IMR-90 (cell line): ENCODE measurements at regions of chr10 and their contacts with region 1.

Region 1: DNA sequence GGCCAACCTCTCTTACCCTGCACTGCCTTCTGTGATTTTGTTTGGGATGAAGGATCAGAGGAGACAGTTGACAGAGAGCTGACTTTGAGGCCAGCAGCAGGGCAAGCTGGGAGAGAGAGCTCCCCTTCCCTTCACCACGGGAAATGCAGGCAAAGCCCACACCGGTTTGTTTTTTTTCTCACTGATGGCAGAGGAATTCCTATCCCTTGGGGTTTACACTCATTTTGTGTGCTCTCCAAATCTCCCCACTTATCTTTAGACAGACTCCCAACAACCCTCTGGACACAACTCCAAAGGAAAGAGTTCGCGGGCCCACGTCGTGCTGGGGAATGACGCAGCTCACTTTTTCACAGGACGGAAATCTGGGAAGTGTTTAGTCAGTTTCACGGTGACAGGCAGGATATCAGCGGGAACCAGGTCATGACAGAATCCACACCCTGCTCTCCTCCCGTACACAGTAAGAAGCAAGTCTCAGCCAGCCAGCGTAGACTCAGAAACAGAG is 68.3 kb upstream of the FAM171A1 start:
- DNase-seq: peak; percentile 11
- ATAC-seq: peak; percentile 73
- H3K4me3 ChIP-seq: peak overlapping the region; percentile 9
- H3K27ac ChIP-seq: no peak overlapping the region
- H3K4me1 ChIP-seq: no peaks in the 10 kb centered on the region
- H3K27me3 ChIP-seq: peaks cover 8% of the 10 kb centered on the region
- CTCF ChIP-seq: peak; percentile 26; the same call in 1 of the 2 replicates
- POLR2A ChIP-seq: no peak
- RAD21 ChIP-seq: no peak

Region 2: DNA sequence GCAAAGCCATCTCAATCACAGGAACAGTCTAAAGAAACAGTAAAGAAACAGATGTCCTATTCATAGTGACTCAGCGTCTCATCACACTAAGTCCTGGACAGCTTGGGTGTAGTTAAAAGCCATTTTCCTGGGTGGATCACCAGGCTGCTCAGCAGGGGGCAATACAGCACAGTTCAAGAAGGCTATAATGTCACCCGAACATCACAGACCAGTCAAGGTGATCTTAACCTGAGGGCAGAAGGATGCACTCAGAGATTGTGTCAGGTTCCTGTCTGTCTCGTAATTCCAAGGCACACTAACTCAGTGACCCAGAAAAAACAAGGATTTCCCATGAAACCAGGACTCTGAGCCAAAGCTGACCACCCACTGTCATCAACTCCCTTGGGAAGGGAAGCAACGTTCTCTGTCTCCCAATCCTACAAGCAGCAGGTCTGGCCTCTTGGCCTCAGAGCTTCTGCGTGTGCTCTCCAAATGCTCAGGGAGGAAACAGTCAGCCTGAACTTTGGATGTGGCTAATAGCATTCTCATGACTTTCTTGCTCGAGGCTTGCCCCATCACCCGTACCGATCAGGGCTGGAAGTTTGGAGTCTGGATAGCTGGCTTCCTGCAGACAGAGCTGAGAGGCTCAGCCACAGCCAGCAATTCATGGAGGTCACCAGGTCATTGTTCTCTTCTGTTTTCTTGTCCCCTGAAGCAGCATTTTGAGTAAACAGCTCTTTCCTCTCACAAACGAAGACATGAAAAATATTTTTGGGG is 22.1 kb after region 1 on chr10:
- CTCF ChIA-PET with region 1: interaction called, 13 read pairs
- POLR2A ChIA-PET with region 1: interaction called, 4 read pairs
- dilution Hi-C with region 1: no loop called
- in situ Hi-C with region 1: no loop called
- intact Hi-C with region 1: no loop called
- DNase-seq: peak; percentile 27
- ATAC-seq: peak; percentile 72
- H3K4me3 ChIP-seq: no peak overlapping the region
- H3K27ac ChIP-seq: no peak overlapping the region
- H3K4me1 ChIP-seq: peaks cover 5% of the 10 kb centered on the region
- H3K27me3 ChIP-seq: peaks cover 4% of the 10 kb centered on the region
- CTCF ChIP-seq: peak; percentile 38; the same call in 1 of the 2 replicates
- POLR2A ChIP-seq: no peak
- RAD21 ChIP-seq: 0 out of 2 replicates have a peak, but pooled peaks have one; percentile 14